ENCODE measurements at regions of chr2 and their contacts with region 1.

Region 1: DNA sequence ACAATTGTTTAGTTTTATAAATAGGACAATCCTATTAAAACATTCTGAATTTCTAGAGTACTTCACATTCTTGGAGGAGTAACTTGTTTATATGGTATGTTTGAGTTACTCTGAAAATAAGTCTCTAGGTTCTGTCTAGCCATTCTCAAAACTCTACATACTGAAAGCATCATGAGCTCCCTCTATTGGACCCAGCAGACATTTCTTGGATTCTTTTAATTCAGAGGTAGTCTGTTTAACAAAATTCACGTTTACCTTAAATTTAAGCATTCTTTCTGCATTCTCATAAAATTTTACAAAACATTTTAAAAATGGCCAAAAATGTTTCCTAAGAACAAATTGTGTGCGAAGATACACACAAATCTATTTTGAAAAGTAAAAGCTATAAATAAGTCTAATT is 15.3 kb downstream of the SP9 start:
- DNase-seq: peak; percentile 22
- ATAC-seq: peak; percentile 74
- H3K4me3 ChIP-seq: no peak overlapping the region
- H3K27ac ChIP-seq: no peak overlapping the region
- H3K4me1 ChIP-seq: peaks cover 2% of the 10 kb centered on the region; the same call in 1 of the 2 replicates
- H3K27me3 ChIP-seq: peaks cover 2% of the 10 kb centered on the region
- CTCF ChIP-seq: peak; percentile 42
- POLR2A ChIP-seq: no peak
- RAD21 ChIP-seq: no peak

Region 2: DNA sequence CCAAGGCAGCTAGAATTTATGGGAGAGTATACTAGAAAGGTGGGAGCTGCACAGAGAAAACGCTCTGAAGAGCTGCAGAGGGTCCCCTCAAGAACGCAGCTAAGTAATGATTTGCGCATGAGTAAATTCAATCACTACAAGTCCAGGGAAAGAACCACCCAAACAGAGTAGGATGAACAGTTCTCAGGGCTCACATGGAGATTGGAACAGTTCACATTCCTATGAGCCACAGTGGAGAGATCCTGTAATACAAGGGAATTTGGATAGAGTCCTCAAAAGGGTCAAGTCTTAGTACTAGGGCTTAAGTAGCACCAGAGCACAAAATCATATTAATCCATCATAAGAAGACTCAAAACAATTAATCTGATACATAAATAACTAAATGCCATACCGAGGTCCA is 114.3 kb before region 1 on chr2:
- CTCF ChIA-PET with region 1: no interaction called
- POLR2A ChIA-PET with region 1: no interaction called
- dilution Hi-C with region 1: no loop called
- in situ Hi-C with region 1: no loop called
- intact Hi-C with region 1: no loop called
- DNase-seq: peak; percentile 31
- ATAC-seq: peak; percentile 72
- H3K4me3 ChIP-seq: no peak overlapping the region
- H3K27ac ChIP-seq: no peak overlapping the region
- H3K4me1 ChIP-seq: no peaks in the 10 kb centered on the region
- H3K27me3 ChIP-seq: no peaks in the 10 kb centered on the region
- CTCF ChIP-seq: no peak
- POLR2A ChIP-seq: no peak
- RAD21 ChIP-seq: no peak

Region 3: DNA sequence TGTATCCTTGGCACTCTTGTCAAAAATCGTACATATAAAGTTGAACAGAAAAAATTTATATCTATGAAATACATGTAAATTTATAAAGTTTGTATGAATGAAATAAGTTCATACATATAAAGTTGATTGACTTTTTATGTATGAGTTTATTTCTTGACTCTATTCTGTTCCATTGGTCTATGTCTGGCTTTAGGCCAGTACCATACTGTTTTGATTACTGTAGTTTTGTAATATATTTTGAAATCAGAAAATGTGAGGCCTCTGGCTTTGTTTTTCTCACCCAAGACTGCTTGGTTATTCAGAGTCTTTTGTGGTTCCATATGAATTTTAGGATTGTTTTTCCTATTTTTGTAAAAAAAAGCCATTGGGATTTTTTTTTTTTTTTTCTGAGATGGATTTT is 57.1 kb before region 1 on chr2:
- CTCF ChIA-PET with region 1: no interaction called
- POLR2A ChIA-PET with region 1: no interaction called
- dilution Hi-C with region 1: no loop called
- in situ Hi-C with region 1: no loop called
- intact Hi-C with region 1: no loop called
- DNase-seq: no peak
- ATAC-seq: no peak
- H3K4me3 ChIP-seq: no peak overlapping the region
- H3K27ac ChIP-seq: no peak overlapping the region
- H3K4me1 ChIP-seq: no peaks in the 10 kb centered on the region
- H3K27me3 ChIP-seq: peaks cover under 1% of the 10 kb centered on the region; the same call in 1 of the 2 replicates
- CTCF ChIP-seq: no peak
- POLR2A ChIP-seq: no peak
- RAD21 ChIP-seq: no peak

Region 4: GRCh38 chr2:174362949-174363348 is 12.9 kb after region 1 on chr2:
- CTCF ChIA-PET with region 1: interaction called, 12 read pairs
- POLR2A ChIA-PET with region 1: no interaction called
- dilution Hi-C with region 1: no loop called
- in situ Hi-C with region 1: no loop called
- intact Hi-C with region 1: no loop called
- DNase-seq: no peak
- ATAC-seq: no peak
- H3K4me3 ChIP-seq: no peak overlapping the region
- H3K27ac ChIP-seq: no peak overlapping the region
- H3K4me1 ChIP-seq: no peaks in the 10 kb centered on the region
- H3K27me3 ChIP-seq: no peaks in the 10 kb centered on the region
- CTCF ChIP-seq: no peak
- POLR2A ChIP-seq: no peak
- RAD21 ChIP-seq: no peak

Region 5: GRCh38 chr2:174487108-174487819 is 137.2 kb after region 1 on chr2:
- CTCF ChIA-PET with region 1: no interaction called
- POLR2A ChIA-PET with region 1: no interaction called
- dilution Hi-C with region 1: no loop called
- in situ Hi-C with region 1: no loop called
- intact Hi-C with region 1: no loop called
- DNase-seq: peak; percentile 97
- ATAC-seq: peak; percentile 96
- H3K4me3 ChIP-seq: peak overlapping the region; percentile 90
- H3K27ac ChIP-seq: peak overlapping the region; percentile 94
- H3K4me1 ChIP-seq: peaks cover 3% of the 10 kb centered on the region; the same call in 1 of the 2 replicates
- H3K27me3 ChIP-seq: no peaks in the 10 kb centered on the region
- CTCF ChIP-seq: no peak
- POLR2A ChIP-seq: peak; percentile 41; the same call in 1 of the 2 replicates
- RAD21 ChIP-seq: no peak

Measured in IMR-90 (cell line).